ENCODE measurements at regions of chrX and their contacts with region 1.

Region 1: DNA sequence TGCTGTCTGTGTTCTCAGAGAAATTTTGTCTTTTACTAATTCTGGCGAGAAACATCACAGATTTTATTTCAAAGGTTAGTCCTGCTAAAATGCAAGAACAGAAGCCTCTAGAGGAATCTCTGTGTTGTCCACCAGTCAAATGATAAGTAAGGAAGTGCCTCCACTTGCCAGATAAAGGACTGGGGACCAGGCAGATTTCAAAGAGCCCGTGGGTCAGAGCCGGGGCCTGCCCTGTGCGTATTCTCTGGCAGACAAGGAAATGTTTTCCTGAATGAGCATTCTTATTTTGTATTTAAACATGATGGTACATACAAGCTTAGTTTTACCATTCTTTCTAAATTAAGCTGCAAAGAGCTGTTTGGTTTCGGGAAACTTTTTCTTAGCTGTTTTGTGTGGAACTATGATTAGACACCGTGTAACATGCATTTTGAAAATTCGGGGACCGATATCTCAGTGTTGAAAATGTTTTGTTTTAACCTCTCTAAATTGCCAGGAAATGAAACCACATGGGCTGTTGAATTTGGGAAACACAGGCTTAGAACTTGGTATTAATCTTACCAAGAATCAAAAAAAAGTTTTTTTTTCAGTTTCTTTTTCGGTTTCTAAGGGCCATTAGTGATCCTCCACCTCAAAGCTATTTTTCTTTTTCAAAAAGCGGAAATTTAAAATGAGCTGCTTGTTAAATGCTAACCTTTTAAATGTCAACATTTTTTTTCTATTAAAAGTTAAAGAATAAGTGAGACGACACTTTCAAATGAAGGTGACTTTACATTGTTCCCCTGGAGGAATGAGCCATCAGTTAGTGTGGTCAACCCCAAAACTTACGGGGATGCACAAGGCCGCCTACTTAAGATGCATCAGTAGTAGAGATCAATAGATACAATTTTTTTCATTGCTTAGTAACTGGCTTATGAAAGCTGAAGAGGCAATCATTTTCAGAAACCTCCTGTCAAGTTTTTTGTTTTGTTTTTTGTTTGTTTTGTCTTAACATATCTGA is 89.6 kb upstream of the MTM1 start:
- DNase-seq: no peak
- ATAC-seq: no peak
- H3K4me3 ChIP-seq: no peak overlapping the region
- H3K27ac ChIP-seq: no peak overlapping the region
- H3K4me1 ChIP-seq: peaks cover 14% of the 10 kb centered on the region
- H3K27me3 ChIP-seq: no peaks in the 10 kb centered on the region
- CTCF ChIP-seq: no peak

Region 2: DNA sequence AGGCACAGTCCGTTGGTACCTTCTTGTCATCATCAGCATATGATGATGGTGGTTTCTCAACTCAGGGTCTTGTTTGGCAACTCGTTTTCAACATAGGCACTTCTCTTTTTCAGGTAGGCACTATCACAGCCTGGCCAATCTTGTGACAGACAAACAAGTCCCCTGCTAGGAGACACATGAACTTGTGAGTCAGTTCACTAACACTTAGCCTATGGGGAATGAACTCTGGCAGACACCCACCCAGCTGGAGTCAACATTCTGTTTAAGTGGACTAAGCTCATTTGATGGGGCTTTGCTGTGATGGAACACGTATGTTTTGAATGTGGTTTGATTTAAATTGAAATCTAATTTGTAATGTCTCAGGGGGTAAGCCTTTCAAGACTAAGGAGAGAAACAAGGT is 216.3 kb before region 1 on chrX:
- CTCF ChIA-PET with region 1: no interaction called
- POLR2A ChIA-PET with region 1: no interaction called
- intact Hi-C with region 1: loop called (anchors 5 kb)
- DNase-seq: no peak
- ATAC-seq: no peak
- H3K4me3 ChIP-seq: no peak overlapping the region
- H3K27ac ChIP-seq: no peak overlapping the region
- H3K4me1 ChIP-seq: no peaks in the 10 kb centered on the region
- H3K27me3 ChIP-seq: no peaks in the 10 kb centered on the region
- CTCF ChIP-seq: no peak

Region 3: GRCh38 chrX:150365051-150365989 is 113.5 kb before region 1 on chrX:
- CTCF ChIA-PET with region 1: no interaction called
- POLR2A ChIA-PET with region 1: no interaction called
- intact Hi-C with region 1: no loop called
- DNase-seq: peak; percentile 57
- ATAC-seq: peak; percentile 16
- H3K4me3 ChIP-seq: peak overlapping the region; percentile 91
- H3K27ac ChIP-seq: peak overlapping the region; percentile 52
- H3K4me1 ChIP-seq: peaks cover 25% of the 10 kb centered on the region
- H3K27me3 ChIP-seq: no peaks in the 10 kb centered on the region
- CTCF ChIP-seq: peak; percentile 61